ENCODE measurements at regions of chr13 and their contacts with region 1.

Region 1: DNA sequence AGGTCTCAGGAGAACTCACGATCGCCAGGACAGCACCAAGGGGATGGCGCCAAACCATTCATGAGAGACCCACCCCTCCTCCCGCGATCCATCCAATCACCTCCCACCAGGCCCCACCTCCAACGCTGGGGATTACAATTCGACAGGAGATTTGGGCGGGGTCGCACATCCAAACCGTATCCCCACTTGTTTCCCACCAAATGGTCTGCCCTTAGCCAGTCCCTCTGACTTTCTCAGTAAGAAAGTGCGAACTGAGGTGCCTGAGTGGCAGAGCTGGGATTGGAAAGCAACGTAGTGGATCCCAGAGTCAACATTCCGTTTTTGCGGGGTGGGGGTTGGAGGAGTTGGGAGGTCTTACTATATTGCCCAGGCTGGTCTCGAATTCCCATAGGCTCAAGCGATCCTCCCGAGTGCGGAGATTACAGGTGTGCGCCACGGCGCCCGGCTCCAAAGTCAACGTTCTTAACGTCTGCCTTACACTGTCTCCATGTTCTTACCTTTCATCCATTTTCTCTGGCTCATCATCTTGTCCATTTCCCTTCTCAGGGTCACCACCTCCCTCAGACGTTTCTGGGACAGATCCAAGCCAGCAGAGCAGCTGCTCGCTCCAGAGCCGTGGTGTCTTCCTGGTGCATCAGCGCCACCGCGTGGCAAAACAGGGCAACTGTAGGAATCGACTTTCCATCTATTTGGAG is 102.7 kb upstream of the ABCC4 start:
- DNase-seq: peak; percentile 7
- H3K4me3 ChIP-seq: peak overlapping the region; percentile 32
- H3K27me3 ChIP-seq: no peaks in the 10 kb centered on the region
- CTCF ChIP-seq: peak; percentile 89

Region 2: DNA sequence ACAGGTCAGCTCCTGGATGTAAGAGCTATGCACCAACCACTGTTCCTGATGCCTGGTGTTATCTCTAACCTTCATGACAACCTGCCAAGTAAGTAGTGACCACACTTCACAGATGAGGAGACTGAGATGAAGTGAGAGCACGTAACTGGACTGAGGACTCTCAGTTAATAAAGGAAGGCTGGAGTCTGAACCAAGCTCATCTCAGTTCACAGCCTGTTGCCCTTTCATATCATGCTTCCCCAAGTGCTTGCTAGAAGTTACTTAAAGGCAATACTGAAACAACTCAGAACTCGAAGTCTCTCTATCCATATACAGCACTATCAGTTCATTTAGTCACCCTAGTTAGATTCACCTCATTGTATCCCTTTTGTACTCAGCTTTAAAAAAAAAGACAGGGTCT is 222.4 kb before region 1 on chr13:
- CTCF ChIA-PET with region 1: interaction called, 13 read pairs
- POLR2A ChIA-PET with region 1: no interaction called
- DNase-seq: no peak
- H3K4me3 ChIP-seq: no peak overlapping the region
- H3K27me3 ChIP-seq: no peaks in the 10 kb centered on the region
- CTCF ChIP-seq: no peak

Region 3: GRCh38 chr13:95387733-95388207 is 16.2 kb before region 1 on chr13:
- CTCF ChIA-PET with region 1: interaction called, 26 read pairs
- POLR2A ChIA-PET with region 1: no interaction called
- DNase-seq: no peak
- H3K4me3 ChIP-seq: no peak overlapping the region
- H3K27me3 ChIP-seq: peaks cover 5% of the 10 kb centered on the region; the same call in 1 of the 2 replicates
- CTCF ChIP-seq: no peak

Measured in BJ (cell line).